Posterior vena cava (tissue), 2 donors: ENCODE measurements at regions of chr10 and their contacts with region 1.

Region 1: GRCh38 chr10:124677749-124678556 is 66.2 kb downstream of the FAM53B start:
- DNase-seq: no peak

Region 2: GRCh38 chr10:125355657-125356056 is 677.7 kb after region 1 on chr10:
- intact Hi-C with region 1: loop called in 1 of 2 experiments (anchors 5 kb)
- DNase-seq: no peak